SK-N-SH (cell line): ENCODE measurements at regions of chr1 and their contacts with region 1.

Region 1: DNA sequence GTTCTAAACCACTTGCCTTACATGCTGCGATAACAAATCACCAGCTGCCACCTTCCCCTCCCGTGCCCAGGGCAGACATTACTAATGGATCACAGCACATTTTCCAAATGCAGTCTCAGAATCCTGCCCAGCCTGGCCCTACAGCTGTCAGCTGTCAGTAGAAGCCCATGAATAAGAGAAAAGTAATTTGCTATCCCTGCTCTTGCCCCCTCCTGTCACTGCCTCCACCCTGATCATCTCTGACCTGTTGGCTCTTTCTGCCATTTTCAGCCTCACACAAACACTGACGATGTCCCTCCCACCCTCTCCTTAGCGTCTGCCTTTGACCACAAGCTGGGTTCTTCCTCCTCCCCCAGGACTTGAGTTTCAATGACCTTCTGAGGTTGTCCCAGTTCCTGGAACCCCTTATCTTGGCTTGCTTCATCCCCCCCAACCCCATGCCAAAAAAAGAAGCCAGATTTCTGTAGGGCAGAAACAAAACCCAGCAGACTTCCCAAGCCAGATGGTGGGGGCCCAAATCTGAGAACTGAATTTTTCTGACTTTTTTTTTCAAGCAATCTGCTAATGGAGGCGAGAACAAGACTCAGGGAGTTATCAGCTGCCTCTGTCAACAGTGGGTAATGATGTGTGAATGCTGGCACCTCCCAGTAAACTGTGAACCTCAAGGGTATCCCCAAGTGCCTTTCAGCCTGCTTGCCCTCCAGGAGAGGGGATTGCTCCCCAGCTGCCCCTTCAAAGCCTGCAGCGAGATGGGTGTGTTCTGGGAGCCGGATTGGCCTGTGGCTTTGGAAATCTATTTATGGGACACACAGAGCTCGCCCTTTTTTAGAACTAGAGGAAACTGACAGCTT is 216.5 kb upstream of the VAMP3 start:
- DNase-seq: no peak
- H3K4me3 ChIP-seq: no peak overlapping the region
- H3K27ac ChIP-seq: peak overlapping the region in 1 of 2 experiments; percentile 100; a peak in 2 of 4 replicates
- H3K4me1 ChIP-seq: peaks cover 6 to 83% of the 10 kb centered on the region in 2 experiments; a peak in 3 of 4 replicates
- H3K27me3 ChIP-seq: no peaks in the 10 kb centered on the region
- CTCF ChIP-seq: no peak
- EP300 ChIP-seq: no peak
- RAD21 ChIP-seq: no peak

Region 2: GRCh38 chr1:7574121-7575040 is 19.8 kb after region 1 on chr1:
- CTCF ChIA-PET with region 1: interaction called, 21 read pairs
- POLR2A ChIA-PET with region 1: interaction called, 13 read pairs
- DNase-seq: no peak
- H3K4me3 ChIP-seq: no peak overlapping the region
- H3K27ac ChIP-seq: peak overlapping the region in 1 of 2 experiments; percentile 39; a peak in 1 of 4 replicates
- H3K4me1 ChIP-seq: peaks cover 0 to 31% of the 10 kb centered on the region in 2 experiments; a peak in 1 of 4 replicates
- H3K27me3 ChIP-seq: no peaks in the 10 kb centered on the region
- CTCF ChIP-seq: no peak
- EP300 ChIP-seq: no peak
- RAD21 ChIP-seq: no peak

Region 3: GRCh38 chr1:7630378-7630777 is 75.8 kb after region 1 on chr1:
- CTCF ChIA-PET with region 1: interaction called, 6 read pairs
- POLR2A ChIA-PET with region 1: interaction called, 26 read pairs
- DNase-seq: peak; percentile 90
- H3K4me3 ChIP-seq: no peak overlapping the region
- H3K27ac ChIP-seq: peak overlapping the region; percentile 32 to 100; a peak in 3 of 4 replicates
- H3K4me1 ChIP-seq: peaks cover 0 to 89% of the 10 kb centered on the region in 2 experiments; a peak in 2 of 4 replicates
- H3K27me3 ChIP-seq: peaks cover 6% of the 10 kb centered on the region; the same call in 1 of the 2 replicates
- CTCF ChIP-seq: no peak
- EP300 ChIP-seq: peak in 1 of 2 experiments; percentile 93; a peak in 2 of 4 replicates
- RAD21 ChIP-seq: peak; percentile 41

Region 4: GRCh38 chr1:7678491-7679158 is 124.0 kb after region 1 on chr1:
- CTCF ChIA-PET with region 1: no interaction called
- POLR2A ChIA-PET with region 1: no interaction called
- DNase-seq: no peak
- H3K4me3 ChIP-seq: no peak overlapping the region
- H3K27ac ChIP-seq: no peak overlapping the region
- H3K4me1 ChIP-seq: peaks cover 0 to 38% of the 10 kb centered on the region in 2 experiments; a peak in 1 of 4 replicates
- H3K27me3 ChIP-seq: no peaks in the 10 kb centered on the region
- CTCF ChIP-seq: no peak
- EP300 ChIP-seq: no peak
- RAD21 ChIP-seq: no peak

Region 5: DNA sequence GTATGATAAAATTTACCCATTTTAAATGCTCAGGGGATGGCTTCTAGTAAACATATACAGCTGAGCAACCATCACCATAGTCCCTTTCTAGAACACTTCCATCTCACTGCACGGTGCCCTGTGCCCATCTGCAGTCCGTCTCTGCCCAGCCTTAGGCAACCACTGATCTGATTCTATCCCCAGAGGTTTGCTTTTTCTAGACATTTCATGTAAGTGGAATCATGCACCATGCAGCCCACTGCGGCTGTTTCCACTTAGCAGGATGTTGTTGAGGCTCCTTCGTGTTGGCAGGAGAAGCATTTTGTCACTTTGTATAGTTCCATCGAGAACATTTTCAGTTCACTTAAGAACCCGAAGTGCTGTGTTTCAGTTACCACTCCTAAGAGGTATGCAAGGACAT is 188.7 kb after region 1 on chr1:
- CTCF ChIA-PET with region 1: no interaction called
- POLR2A ChIA-PET with region 1: no interaction called
- DNase-seq: peak; percentile 58
- H3K4me3 ChIP-seq: no peak overlapping the region
- H3K27ac ChIP-seq: peak overlapping the region in 1 of 2 experiments; percentile 47; a peak in 1 of 4 replicates
- H3K4me1 ChIP-seq: peaks cover 0 to 2% of the 10 kb centered on the region in 2 experiments; a peak in 1 of 4 replicates
- H3K27me3 ChIP-seq: no peaks in the 10 kb centered on the region
- CTCF ChIP-seq: no peak
- EP300 ChIP-seq: peak in 1 of 2 experiments; percentile 19; a peak in 1 of 4 replicates
- RAD21 ChIP-seq: no peak; the same call in 1 of the 2 replicates

Region 6: DNA sequence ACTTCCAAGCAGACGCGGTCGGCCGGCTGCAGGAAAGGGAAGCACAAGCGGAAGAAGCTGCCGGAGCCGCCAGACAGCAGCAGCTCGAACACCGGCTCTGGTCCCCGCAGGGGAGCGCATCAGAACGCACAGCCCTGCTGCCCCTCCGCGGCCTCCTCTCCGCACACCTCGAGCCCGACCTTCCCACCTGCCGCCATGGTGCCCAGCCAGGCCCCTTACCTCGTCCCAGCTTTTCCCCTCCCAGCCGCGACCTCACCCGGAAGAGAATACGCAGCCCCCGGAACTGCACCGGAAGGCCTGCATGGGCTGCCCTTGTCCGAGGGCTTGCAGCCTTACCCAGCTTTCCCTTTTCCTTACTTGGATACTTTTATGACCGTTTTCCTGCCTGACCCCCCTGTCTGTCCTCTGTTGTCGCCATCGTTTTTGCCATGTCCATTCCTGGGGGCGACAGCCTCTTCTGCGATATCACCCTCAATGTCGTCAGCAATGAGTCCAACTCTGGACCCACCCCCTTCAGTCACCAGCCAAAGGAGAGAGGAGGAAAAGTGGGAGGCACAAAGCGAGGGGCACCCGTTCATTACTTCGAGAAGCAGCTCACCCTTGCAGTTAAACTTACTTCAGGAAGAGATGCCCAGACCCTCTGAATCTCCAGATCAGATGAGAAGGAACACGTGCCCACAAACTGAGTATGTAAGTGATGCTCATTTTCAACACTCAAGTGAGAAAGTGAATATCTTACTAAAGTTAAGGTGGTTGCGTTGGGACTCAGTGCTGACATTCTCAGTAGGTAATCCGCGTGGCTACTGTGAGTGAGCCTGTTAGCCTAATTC is 272.7 kb after region 1 on chr1:
- CTCF ChIA-PET with region 1: no interaction called
- POLR2A ChIA-PET with region 1: no interaction called
- DNase-seq: no peak
- H3K4me3 ChIP-seq: no peak overlapping the region
- H3K27ac ChIP-seq: no peak overlapping the region
- H3K4me1 ChIP-seq: no peaks in the 10 kb centered on the region
- H3K27me3 ChIP-seq: no peaks in the 10 kb centered on the region
- CTCF ChIP-seq: no peak
- EP300 ChIP-seq: no peak
- RAD21 ChIP-seq: no peak

Region 7: GRCh38 chr1:7869136-7869905 is 314.7 kb after region 1 on chr1:
- CTCF ChIA-PET with region 1: no interaction called
- POLR2A ChIA-PET with region 1: no interaction called
- DNase-seq: no peak
- H3K4me3 ChIP-seq: no peak overlapping the region
- H3K27ac ChIP-seq: no peak overlapping the region
- H3K4me1 ChIP-seq: no peaks in the 10 kb centered on the region
- H3K27me3 ChIP-seq: no peaks in the 10 kb centered on the region
- CTCF ChIP-seq: no peak
- EP300 ChIP-seq: no peak
- RAD21 ChIP-seq: no peak